Posterior vena cava (tissue), 2 donors: ENCODE measurements at regions of chr9 and their contacts with region 1.

Region 1: GRCh38 chr9:124852829-124853531 is at the start of gene WDR38:
- DNase-seq: peak; percentile 91
- total RNA-seq, gene WDR38: not detected

Region 2: DNA sequence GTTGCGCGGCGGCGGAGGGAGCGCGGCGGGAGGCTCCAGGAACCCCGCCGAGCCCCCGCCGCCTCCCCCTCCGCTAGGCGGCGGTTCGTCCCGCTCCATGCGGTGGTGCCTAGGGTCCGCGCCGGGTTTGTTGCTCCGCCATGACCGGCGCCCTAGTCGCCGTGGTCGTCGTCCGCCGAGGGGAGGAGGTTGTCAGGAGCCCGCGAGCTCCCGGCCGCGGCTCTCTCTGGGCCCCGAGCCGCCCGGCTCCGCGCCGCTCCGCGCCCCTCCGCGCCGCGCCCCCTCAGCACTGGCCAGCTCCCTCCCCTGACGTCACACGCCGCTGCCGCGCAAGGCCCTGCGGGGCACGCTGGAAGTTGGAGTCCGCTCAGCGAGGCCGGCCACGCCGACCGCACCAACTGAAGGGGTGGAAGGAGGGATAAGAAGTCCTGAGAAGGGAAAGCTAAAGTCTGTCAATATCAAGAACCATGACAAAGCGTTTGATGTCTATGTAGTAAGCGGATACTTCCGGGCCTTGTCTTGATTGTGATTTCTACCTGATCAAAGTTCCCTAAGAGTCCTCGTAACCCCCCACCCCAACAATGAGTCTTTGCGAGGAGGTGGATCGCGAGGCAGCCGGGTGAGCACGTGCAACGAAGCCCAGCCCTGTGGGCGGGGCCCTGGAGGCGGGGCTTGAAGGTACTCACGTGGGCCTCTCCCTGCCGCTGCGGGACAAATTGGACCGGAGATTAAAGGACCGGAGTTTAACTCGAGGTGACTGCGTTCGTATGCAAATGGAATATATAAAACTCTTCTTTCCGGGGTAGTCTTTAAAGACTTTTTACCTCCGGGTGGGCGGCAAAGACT is 81.7 kb before region 1 on chr9 and contains the start of gene NR6A1:
- intact Hi-C with region 1: loop called (anchors 2 kb)
- DNase-seq: peak; percentile 99
- total RNA-seq, gene NR6A1: 0.23 to 0.76 TPM

Region 3: DNA sequence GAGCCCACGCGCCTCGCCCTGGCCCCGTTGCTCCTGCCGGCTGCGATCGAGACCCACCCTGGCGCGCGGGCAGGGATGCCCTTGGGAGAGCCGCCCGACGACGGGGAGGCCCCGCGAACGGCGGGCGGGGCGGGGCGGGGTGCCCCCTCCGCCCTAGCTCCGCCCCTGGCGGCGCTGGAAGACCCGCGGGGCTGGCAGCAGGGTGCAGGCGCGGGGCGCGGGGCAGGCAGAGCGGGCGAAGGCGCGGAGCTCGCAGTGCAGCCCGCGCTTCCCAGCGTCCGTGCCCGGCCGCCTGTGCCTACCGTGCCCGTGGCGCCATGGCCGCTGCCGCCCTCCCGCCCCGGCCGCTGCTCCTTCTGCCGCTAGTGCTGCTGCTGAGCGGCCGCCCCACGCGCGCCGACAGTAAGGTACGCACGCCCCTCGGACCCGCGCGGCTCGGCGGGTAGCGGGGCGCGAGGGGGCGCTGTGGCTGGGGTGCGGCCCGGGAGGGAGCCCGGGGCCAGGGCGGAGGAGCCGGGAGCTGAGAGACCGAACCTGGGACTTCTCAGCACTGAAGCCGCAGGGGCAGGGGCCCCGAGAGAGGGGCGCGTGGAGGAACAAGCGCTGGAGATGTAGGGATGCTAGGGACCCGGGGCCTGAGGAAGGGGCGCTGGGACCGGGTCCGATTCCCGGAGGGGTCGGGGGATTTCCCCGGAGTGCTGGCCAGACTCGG is 75.9 kb before region 1 on chr9 and contains the start of gene OLFML2A:
- intact Hi-C with region 1: loop called (anchors 2 kb)
- DNase-seq: peak; percentile 75
- total RNA-seq, gene OLFML2A: 7.8 to 9.1 TPM

Region 4: GRCh38 chr9:125361837-125362531 is 509.0 kb after region 1 on chr9:
- intact Hi-C with region 1: loop called in 1 of 2 experiments (anchors 10 kb)
- DNase-seq: no peak

Region 5: GRCh38 chr9:125374443-125375309 is 521.7 kb after region 1 on chr9:
- intact Hi-C with region 1: loop called (anchors 10 kb)
- DNase-seq: peak; percentile 88